WTC11 (cell line): ENCODE measurements at regions of chr9 and their contacts with region 1.

Region 1: DNA sequence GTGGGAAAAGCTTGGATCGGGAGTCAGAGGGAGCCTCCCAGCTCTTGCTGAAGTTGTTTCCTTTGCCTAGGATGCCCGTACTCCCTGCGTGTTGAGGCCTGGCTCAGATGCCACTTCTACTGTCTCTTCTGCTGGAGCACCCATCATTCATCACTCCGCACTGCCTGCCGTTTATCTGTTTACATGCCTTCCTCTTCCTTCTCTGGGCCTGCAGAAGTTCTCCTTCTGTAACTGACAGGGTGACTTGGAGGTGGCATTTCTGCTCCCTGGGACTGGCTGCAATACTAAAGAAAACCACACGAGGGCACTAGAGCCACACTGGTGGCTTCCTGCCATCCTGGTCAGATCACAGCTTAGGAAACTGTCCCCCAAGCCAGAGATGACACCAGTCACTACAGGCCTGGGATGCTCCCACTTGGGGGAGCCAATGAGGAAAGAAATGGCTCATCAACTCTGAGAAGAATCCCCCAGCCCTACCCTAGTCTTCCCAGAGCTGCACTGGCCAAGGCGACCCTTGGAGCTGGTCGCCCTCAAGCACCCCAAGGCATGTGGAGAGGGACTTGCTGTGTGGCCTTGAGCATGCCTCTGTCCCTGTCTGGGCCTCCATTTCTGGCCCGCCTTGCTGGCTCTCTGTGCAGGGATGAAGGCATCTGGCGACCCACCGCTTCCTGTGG is 9.7 kb upstream of the SLC25A51 start:
- DNase-seq: peak; percentile 92
- ATAC-seq: peak; percentile 96
- H3K4me3 Mint-ChIP-seq: no peak overlapping the region
- H3K27ac Mint-ChIP-seq: no peak overlapping the region
- H3K4me1 Mint-ChIP-seq: 0 out of 2 replicates have a peak, but pooled peaks cover 3% of the 10 kb centered on the region
- H3K27me3 Mint-ChIP-seq: no peaks in the 10 kb centered on the region
- CTCF ChIP-seq: peak; percentile 97

Region 2: GRCh38 chr9:38008168-38009034 is 94.8 kb after region 1 on chr9:
- CTCF ChIA-PET with region 1: interaction called, 11 read pairs
- POLR2A ChIA-PET with region 1: no interaction called
- DNase-seq: peak; percentile 34
- ATAC-seq: peak; percentile 40
- H3K4me3 Mint-ChIP-seq: 0 out of 2 replicates have a peak overlapping the region, but pooled peaks have one; percentile 0
- H3K27ac Mint-ChIP-seq: peak overlapping the region; percentile 95
- H3K4me1 Mint-ChIP-seq: peaks cover 45% of the 10 kb centered on the region
- H3K27me3 Mint-ChIP-seq: no peaks in the 10 kb centered on the region
- CTCF ChIP-seq: no peak

Region 3: DNA sequence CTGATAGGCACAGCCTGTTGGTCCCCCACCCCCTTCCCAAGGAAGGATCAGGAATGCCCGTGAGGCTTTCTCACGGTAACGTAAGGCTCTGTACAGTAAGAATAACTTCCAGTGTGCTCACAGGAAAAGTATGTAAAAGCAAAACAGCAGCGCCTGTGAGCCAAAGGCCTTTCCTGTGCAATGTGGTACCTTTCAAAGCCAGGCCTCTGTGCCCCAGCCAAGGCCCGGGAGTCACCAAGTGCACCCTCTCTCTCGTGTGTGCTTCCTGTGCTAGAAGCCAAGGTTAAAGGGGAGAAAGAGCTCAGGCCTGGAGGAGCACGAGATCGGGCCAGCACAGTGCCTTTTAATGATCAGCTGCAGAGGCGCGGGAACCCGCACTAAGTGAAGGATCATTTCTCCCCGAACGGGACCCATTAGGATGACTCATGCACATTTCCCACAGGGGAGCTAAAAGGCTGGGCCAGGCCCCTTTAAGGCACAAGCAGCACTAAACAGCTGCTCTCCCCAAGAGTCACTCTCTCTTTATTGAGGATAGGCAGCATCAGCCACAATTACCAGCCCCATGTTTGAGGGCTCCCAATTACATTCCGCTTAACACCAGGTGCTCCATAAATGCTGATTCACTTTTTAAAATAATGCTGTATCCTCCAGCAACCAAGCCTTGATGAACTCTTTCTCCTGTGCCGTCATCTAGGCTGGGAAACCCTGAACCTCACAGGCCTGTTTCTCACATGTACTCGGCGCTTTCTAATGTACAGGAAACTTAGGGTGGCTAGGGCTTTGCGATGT is 112.6 kb after region 1 on chr9:
- CTCF ChIA-PET with region 1: interaction called, 16 read pairs
- POLR2A ChIA-PET with region 1: no interaction called
- DNase-seq: no peak
- ATAC-seq: peak; percentile 55
- H3K4me3 Mint-ChIP-seq: no peak overlapping the region
- H3K27ac Mint-ChIP-seq: peak overlapping the region; percentile 72
- H3K4me1 Mint-ChIP-seq: peaks cover 63% of the 10 kb centered on the region
- H3K27me3 Mint-ChIP-seq: no peaks in the 10 kb centered on the region
- CTCF ChIP-seq: no peak

Region 4: DNA sequence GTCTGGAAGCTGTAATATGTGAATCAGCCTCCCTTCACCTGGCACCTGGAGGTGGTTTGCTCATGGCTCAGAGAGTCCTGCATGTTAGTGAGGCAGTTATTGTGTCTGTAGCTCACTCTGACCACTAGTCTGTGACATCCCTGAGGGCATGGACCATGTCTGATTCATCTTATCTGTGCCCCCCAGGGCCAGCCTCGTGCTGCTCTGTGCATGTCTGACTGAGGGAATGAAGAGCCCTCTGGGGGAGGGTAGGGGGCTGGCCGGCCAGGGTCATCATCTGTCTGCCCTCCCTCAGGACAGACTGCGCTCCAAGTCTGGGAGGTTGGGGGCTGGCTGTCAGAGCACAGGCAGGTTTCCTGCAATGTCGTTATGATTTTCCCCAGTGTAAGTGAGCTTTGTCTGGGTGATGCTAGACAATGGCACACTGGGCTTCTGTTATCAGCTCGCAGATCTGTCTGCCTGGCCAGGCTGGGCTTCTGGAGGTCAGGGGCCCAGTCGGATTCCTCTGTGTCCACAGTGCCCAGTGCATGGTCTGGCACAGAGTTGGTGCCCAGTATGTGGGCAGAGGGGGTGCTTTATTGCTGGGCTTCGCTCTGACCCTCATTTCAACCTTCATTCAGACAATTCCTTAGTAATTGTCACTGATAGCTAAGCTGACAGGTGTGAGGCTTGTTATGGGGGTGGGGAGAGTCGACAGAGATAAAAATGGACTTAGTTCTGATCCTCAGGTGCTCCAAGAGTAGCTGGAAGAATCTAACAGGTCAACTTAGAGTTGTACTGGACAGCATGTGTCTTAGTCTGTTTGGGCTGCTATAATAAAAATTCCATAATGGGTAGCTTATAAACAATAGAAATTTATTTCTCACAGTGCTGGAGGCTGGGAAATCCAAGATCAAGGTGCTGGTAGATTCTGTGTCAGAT is 241.1 kb after region 1 on chr9:
- CTCF ChIA-PET with region 1: interaction called, 30 read pairs
- POLR2A ChIA-PET with region 1: no interaction called
- DNase-seq: no peak
- ATAC-seq: no peak
- H3K4me3 Mint-ChIP-seq: no peak overlapping the region
- H3K27ac Mint-ChIP-seq: no peak overlapping the region
- H3K4me1 Mint-ChIP-seq: no peaks in the 10 kb centered on the region
- H3K27me3 Mint-ChIP-seq: peaks cover 15% of the 10 kb centered on the region
- CTCF ChIP-seq: no peak

Region 5: DNA sequence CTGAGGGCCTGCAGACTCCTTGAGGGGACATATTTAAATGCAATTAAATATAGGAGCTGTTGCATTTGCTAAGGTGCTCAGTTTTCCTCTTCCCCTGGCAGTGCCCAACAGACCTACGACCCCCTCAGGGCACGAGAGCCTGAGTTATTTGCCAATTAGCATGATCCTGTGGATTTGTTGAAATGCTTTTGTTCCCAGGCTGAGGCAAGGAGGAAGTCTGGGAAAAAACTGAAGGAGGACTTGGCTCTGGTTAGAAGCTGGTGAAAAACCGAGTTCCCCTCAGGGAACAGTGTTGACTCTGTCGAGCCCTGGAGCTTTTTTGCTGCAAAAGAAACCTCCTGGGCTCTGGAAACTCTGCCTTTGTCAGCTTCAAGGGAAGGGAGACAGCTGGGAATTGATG is 259.0 kb after region 1 on chr9:
- CTCF ChIA-PET with region 1: no interaction called
- POLR2A ChIA-PET with region 1: no interaction called
- DNase-seq: peak; percentile 26
- ATAC-seq: peak; percentile 89
- H3K4me3 Mint-ChIP-seq: no peak overlapping the region
- H3K27ac Mint-ChIP-seq: peak overlapping the region; percentile 65; the same call in 1 of the 2 replicates
- H3K4me1 Mint-ChIP-seq: peaks cover 29% of the 10 kb centered on the region
- H3K27me3 Mint-ChIP-seq: peaks cover 26% of the 10 kb centered on the region
- CTCF ChIP-seq: no peak

Region 6: GRCh38 chr9:38263532-38263931 is 349.9 kb after region 1 on chr9:
- CTCF ChIA-PET with region 1: interaction called, 37 read pairs
- POLR2A ChIA-PET with region 1: no interaction called
- DNase-seq: no peak
- ATAC-seq: no peak; the same call in 1 of the 2 replicates
- H3K4me3 Mint-ChIP-seq: no peak overlapping the region
- H3K27ac Mint-ChIP-seq: no peak overlapping the region
- H3K4me1 Mint-ChIP-seq: no peaks in the 10 kb centered on the region
- H3K27me3 Mint-ChIP-seq: peaks cover 34% of the 10 kb centered on the region
- CTCF ChIP-seq: no peak